B cell (primary cell): ENCODE measurements at regions of chr15 and their contacts with region 1.

Region 1: DNA sequence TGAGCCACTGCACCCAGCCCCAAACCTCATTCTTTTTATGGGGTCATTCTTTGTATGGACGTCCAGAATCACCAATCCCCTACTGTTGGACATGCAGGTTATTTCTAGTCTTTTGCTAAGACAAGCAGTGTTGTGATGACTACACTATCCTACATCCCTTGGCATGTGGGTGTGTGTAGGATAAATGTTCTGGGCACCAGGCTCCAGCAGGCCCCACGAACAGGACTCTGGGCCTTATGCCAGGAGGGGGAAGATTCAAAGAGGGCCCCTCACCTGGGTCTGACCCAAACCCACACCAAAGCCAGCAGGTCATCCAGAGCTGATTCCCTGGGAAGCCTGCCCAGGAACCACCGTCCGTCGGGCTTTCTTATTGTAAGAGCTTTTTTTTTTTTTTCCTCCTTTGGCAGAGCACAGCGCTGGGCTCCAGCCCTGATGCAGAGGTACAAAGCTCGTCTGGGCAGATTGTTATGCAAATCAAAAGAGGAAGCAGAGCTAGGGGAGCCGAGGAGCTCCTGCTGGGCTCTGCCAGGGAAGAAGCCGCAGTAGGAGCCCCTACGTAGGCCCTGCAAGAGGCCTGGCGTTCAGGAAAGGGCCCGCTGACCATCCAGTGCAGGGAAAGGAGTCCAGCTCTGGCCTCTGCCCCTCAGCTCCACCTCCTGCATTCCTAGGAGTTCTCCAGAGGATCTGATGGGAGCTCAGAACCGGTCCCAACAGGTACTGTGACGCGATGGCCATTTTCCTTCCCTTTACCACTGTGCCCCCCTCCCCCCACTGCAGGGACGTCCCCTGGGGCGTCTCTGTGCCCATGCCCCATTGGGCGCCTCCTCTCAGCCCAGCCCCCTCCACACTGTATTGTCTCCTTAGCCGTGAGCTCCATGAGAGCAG is 29.0 kb upstream of the FURIN start:
- DNase-seq: peak; percentile 74
- ATAC-seq: peak; percentile 54
- H3K4me3 ChIP-seq: peak overlapping the region in 3 of 5 experiments; percentile 52 to 74 (median 63)
- H3K4me3 Mint-ChIP-seq: peak overlapping the region; percentile 66
- H3K27ac ChIP-seq: peak overlapping the region in 1 of 2 donors; percentile 67
- H3K27ac Mint-ChIP-seq: peak overlapping the region; percentile 61
- H3K4me1 ChIP-seq: peaks cover 33 to 46% of the 10 kb centered on the region in 2 donors
- H3K4me1 Mint-ChIP-seq: peaks cover 38% of the 10 kb centered on the region
- H3K27me3 ChIP-seq: no peaks in the 10 kb centered on the region
- H3K27me3 Mint-ChIP-seq: no peaks in the 10 kb centered on the region
- CTCF ChIP-seq: no peak

Region 2: DNA sequence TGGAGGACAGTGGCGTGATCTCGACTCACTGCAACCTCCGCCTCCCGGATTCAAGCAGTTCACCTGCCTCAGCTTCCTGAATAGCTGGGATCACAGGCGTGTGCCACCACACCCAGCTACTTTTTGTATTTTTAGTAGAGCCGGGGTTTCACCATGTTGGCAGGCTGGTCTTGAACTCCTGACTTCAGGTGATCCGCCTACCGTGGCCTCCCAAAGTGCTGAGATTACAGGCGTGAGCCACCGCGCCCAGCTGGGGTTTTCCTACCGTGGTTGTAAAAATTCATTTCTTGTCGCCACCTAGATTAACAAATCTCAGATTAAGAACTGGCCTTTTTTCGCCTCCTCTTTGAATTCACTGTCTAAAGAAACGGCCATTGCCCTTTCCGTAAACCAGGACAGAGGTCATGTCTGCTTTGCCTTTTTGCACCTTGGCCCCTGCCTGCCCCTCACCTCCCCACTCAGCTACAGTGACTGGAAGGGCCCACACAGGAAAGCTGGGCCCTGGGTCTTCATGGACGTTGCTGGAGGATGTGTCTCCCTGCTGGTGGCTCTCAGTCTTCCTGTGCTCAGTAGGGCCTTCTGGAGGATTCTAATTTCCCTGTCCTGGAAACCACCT is 821.1 kb before region 1 on chr15:
- CTCF ChIA-PET with region 1: no interaction called
- POLR2A ChIA-PET with region 1: interaction called, 11 read pairs
- intact Hi-C with region 1: no loop called
- DNase-seq: no peak
- ATAC-seq: no peak
- H3K4me3 ChIP-seq: no peak overlapping the region
- H3K4me3 Mint-ChIP-seq: no peak overlapping the region
- H3K27ac ChIP-seq: no peak overlapping the region
- H3K27ac Mint-ChIP-seq: no peak overlapping the region
- H3K4me1 ChIP-seq: peaks cover 15 to 27% of the 10 kb centered on the region in 2 donors
- H3K4me1 Mint-ChIP-seq: peaks cover 34% of the 10 kb centered on the region
- H3K27me3 ChIP-seq: no peaks in the 10 kb centered on the region
- H3K27me3 Mint-ChIP-seq: no peaks in the 10 kb centered on the region
- CTCF ChIP-seq: no peak

Region 3: DNA sequence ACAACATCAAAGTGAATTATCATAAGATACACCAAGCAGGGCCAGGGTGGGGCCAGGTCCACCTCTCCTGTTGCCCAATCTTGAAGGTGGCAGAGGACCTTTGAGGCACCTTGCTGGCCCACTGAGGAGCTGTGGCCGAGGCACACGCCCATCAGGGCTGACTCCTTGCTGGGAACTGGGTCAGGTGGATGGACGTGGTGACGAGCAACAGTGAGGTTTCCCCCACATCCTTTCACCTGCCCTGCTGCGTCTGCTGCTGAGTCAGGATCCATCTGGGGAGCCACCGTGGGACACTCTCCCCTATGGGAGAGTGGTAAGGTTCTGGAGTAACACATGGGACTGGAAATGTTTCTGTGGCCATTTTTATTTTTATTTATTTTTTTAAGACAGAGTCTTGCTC is 11.7 kb after region 1 on chr15:
- CTCF ChIA-PET with region 1: interaction called, 8 read pairs
- POLR2A ChIA-PET with region 1: interaction called, 28 read pairs
- intact Hi-C with region 1: loop called (anchors 1 kb)
- DNase-seq: no peak
- ATAC-seq: no peak
- H3K4me3 ChIP-seq: no peak overlapping the region
- H3K4me3 Mint-ChIP-seq: peak overlapping the region; percentile 66
- H3K27ac ChIP-seq: no peak overlapping the region
- H3K27ac Mint-ChIP-seq: peak overlapping the region; percentile 41
- H3K4me1 ChIP-seq: peaks cover 54 to 56% of the 10 kb centered on the region in 2 donors
- H3K4me1 Mint-ChIP-seq: peaks cover 54% of the 10 kb centered on the region
- H3K27me3 ChIP-seq: no peaks in the 10 kb centered on the region
- H3K27me3 Mint-ChIP-seq: no peaks in the 10 kb centered on the region
- CTCF ChIP-seq: no peak

Region 4: GRCh38 chr15:90860942-90861675 is 21.7 kb after region 1 on chr15:
- CTCF ChIA-PET with region 1: interaction called, 4 read pairs
- POLR2A ChIA-PET with region 1: interaction called, 4 read pairs
- intact Hi-C with region 1: loop called (anchors 1 kb)
- DNase-seq: no peak
- ATAC-seq: no peak
- H3K4me3 ChIP-seq: no peak overlapping the region
- H3K4me3 Mint-ChIP-seq: no peak overlapping the region
- H3K27ac ChIP-seq: no peak overlapping the region
- H3K27ac Mint-ChIP-seq: no peak overlapping the region
- H3K4me1 ChIP-seq: peaks cover 21 to 32% of the 10 kb centered on the region in 2 donors
- H3K4me1 Mint-ChIP-seq: peaks cover 32% of the 10 kb centered on the region
- H3K27me3 ChIP-seq: no peaks in the 10 kb centered on the region
- H3K27me3 Mint-ChIP-seq: no peaks in the 10 kb centered on the region
- CTCF ChIP-seq: no peak

Region 5: GRCh38 chr15:90869601-90870353 is 30.3 kb after region 1 on chr15:
- CTCF ChIA-PET with region 1: no interaction called
- POLR2A ChIA-PET with region 1: interaction called, 5 read pairs
- intact Hi-C with region 1: loop called (anchors 5 kb)
- DNase-seq: peak; percentile 50
- ATAC-seq: peak; percentile 59
- H3K4me3 ChIP-seq: peak overlapping the region in 1 of 5 experiments; percentile 18
- H3K4me3 Mint-ChIP-seq: peak overlapping the region; percentile 92
- H3K27ac ChIP-seq: peak overlapping the region; percentile 19 to 32
- H3K27ac Mint-ChIP-seq: peak overlapping the region; percentile 95
- H3K4me1 ChIP-seq: peaks cover 31 to 39% of the 10 kb centered on the region in 2 donors
- H3K4me1 Mint-ChIP-seq: peaks cover 41% of the 10 kb centered on the region
- H3K27me3 ChIP-seq: no peaks in the 10 kb centered on the region
- H3K27me3 Mint-ChIP-seq: no peaks in the 10 kb centered on the region
- CTCF ChIP-seq: no peak

Region 6: DNA sequence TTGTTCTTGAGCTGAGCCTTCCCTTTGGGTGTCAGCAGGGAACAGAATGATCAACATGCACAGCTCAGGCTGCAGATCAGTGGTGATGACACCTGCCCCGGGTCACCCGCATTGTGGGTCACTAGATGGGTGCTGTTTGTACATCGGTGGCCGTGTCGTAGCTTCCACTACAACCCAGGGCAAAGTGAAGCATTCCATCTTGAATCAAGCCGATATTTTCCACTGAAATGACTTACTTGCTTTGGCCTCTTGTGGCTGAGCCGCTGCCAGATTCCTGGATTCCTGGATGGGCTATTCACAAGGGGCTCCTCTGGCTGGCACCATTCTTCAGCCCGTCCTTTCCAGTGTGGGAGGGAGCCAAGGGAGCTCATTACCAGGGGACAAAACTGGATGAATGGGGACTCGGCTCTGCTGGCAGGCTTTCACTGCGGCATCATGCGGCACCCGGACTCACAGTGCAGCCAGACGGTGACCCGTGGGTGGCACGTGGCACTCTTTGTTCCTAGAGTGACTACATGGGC is 1079.6 kb after region 1 on chr15:
- CTCF ChIA-PET with region 1: no interaction called
- POLR2A ChIA-PET with region 1: no interaction called
- intact Hi-C with region 1: no loop called
- DNase-seq: no peak
- ATAC-seq: no peak
- H3K4me3 ChIP-seq: no peak overlapping the region
- H3K4me3 Mint-ChIP-seq: no peak overlapping the region
- H3K27ac ChIP-seq: no peak overlapping the region
- H3K27ac Mint-ChIP-seq: no peak overlapping the region
- H3K4me1 ChIP-seq: peaks cover 0 to 16% of the 10 kb centered on the region in 2 donors
- H3K4me1 Mint-ChIP-seq: peaks cover 13% of the 10 kb centered on the region
- H3K27me3 ChIP-seq: peaks cover 0 to 2% (median 0%) of the 10 kb centered on the region in 4 experiments
- H3K27me3 Mint-ChIP-seq: no peaks in the 10 kb centered on the region
- CTCF ChIP-seq: no peak